Mammary epithelial cell (primary cell): ENCODE measurements at regions of chr12 and their contacts with region 1.

Region 1: DNA sequence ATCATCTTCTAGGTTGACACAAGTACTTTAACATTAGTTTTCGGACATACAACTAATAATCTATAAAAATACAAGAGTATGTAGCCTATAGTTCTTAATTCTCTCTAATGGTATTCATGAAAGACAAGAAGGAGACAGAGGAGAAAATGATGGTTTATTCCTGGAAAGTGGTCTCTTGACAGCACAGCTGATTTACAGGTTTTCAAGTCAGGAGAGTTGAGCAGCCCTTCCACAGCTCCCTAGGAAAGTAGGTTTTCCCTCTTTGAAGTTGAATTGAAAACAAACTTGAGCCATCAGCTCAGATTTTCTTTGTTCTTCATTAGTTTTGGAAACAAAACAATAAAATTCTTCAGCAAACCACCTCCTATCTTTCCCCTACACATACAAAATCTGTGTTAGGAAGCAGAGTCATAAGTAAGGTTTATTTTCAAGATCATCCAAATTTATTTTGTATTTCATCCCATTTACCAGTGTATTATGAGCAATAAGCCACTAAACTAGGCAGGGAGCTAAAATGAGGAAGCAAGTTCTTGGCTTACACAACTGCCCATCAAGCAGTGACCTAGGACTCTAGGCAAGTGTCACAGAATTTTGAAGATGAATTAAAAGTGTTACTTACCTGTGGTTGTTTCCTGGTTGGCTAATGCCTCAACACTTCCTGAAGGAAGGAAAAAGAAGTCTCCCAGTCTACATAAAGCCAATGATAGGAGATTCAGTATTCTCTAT is 357.0 kb downstream of the BCAT1 start:
- DNase-seq: no peak
- H3K4me3 ChIP-seq: no peak overlapping the region
- H3K27ac ChIP-seq: no peak overlapping the region
- H3K4me1 ChIP-seq: no peaks in the 10 kb centered on the region
- H3K27me3 ChIP-seq: no peaks in the 10 kb centered on the region
- CTCF ChIP-seq: no peak

Region 2: DNA sequence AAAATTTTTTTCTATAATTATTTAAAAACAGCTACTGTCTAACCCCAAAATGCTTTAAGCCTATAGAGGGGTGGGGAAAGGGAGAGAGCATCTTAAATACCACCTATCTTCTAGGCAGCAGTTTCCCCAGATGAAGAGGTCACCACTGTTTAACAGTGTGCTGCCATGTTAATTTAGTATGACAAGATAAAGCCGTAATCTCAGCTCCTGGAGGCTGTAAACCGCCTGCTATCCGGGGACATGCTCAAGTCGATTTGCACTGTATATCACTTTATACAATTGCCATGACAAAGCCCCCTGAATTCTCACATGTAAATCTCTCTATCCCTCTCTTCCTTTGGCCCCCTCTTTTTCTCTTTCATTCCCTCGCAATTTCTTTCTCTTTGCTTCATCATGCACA is 710.9 kb before region 1 on chr12:
- CTCF ChIA-PET with region 1: no interaction called
- dilution Hi-C with region 1: no loop called
- in situ Hi-C with region 1: no loop called
- intact Hi-C with region 1: no loop called
- DNase-seq: no peak
- H3K4me3 ChIP-seq: no peak overlapping the region
- H3K27ac ChIP-seq: no peak overlapping the region
- H3K4me1 ChIP-seq: no peaks in the 10 kb centered on the region
- H3K27me3 ChIP-seq: no peaks in the 10 kb centered on the region
- CTCF ChIP-seq: no peak

Region 3: DNA sequence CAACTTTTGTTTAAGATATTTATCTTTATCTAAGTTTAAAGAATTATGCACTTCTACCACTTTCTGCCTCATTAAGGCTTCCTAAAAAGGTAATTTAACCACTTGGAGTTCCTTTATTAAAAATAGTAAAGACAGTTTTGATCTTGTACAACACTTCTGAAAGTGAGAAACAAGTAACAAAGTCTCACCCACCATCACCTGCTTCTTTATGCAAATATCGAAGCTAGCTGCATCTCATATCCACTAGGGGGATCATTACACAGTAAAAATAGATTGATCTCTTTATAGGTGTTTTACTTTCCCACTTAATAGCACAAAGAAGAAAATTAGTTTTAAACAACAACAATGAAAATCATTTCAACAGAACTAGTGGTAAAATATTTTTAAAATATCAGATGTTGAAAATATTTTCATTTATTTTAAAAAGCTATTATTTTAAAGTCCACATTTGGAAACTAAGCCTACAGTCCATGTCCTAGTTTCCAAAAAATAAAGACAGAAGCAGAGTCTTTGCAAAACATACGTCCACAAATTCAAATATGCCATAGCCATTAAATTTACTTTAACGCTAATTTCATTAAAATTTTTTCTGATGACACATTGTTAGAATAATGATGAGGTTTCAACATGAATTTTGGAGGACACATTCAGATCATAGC is 482.4 kb before region 1 on chr12:
- CTCF ChIA-PET with region 1: no interaction called
- dilution Hi-C with region 1: no loop called
- in situ Hi-C with region 1: no loop called
- intact Hi-C with region 1: loop called (anchors 5 kb)
- DNase-seq: peak; percentile 7
- H3K4me3 ChIP-seq: no peak overlapping the region
- H3K27ac ChIP-seq: no peak overlapping the region
- H3K4me1 ChIP-seq: no peaks in the 10 kb centered on the region
- H3K27me3 ChIP-seq: no peaks in the 10 kb centered on the region
- CTCF ChIP-seq: peak; percentile 51 to 59

Region 4: DNA sequence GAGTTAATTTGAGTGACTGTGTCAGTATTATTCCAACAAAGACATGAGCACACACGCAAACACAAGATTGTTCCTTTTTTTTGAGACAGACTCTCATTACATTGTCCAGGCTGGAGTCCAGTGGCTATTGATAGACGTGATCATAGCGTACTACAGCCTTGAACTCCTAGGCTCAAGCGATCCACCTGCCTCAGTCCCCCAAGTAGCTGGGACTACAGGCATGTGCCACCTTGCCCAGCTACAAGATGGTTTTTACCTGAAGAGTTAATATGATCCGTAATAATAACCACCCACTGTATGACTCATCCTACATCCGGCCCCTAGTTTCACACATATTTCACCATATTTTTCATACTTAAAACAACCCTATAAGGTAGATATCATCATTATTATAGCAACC is 330.2 kb after region 1 on chr12:
- CTCF ChIA-PET with region 1: no interaction called
- dilution Hi-C with region 1: no loop called
- in situ Hi-C with region 1: no loop called
- intact Hi-C with region 1: no loop called
- DNase-seq: peak; percentile 66
- H3K4me3 ChIP-seq: no peak overlapping the region
- H3K27ac ChIP-seq: peak overlapping the region; percentile 40
- H3K4me1 ChIP-seq: peaks cover 18% of the 10 kb centered on the region
- H3K27me3 ChIP-seq: no peaks in the 10 kb centered on the region
- CTCF ChIP-seq: no peak